A549 (cell line): ENCODE measurements at regions of chr2 and their contacts with region 1.

Region 1: DNA sequence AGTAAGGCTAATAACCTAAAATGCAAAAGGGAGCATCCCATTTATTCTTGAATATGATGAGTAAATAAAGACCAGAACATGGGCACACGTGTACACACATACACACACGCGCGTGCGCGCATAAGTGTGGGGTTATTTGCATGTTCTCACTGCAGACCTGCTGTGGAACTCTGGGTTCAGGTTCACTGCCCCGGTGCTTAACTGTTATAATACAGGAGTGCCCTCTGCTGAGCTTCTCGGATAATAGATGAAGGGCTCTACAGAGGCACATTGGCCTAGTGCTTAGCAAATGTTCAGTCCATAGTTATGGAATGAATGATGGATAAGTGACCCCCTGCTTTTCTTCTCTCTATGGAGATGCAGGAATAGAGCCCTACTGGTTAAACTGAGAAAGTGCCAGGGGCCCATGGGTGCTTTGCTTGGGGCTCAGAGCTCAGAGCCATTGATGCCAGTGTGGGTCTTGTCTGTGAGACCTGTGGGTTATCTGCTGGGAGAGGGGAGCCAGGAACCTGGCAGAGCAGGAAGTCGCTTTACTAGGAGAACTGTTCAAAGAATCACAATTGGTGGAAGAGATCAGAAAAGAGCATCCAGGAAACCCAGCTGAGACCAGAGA is 3.6 kb upstream of the ARL4C start:
- DNase-seq: peak in 1 of 2 experiments; percentile 83
- ATAC-seq: peak; percentile 45 to 73; a peak in 5 of 6 replicates
- H3K4me3 ChIP-seq: no peak overlapping the region
- H3K27ac ChIP-seq: peak overlapping the region; percentile 55 to 99
- H3K4me1 ChIP-seq: peaks cover 34% of the 10 kb centered on the region
- CTCF ChIP-seq: peak; percentile 87
- EP300 ChIP-seq: no peak
- POLR2A ChIP-seq: no peak
- RAD21 ChIP-seq: peak; percentile 98

Region 2: DNA sequence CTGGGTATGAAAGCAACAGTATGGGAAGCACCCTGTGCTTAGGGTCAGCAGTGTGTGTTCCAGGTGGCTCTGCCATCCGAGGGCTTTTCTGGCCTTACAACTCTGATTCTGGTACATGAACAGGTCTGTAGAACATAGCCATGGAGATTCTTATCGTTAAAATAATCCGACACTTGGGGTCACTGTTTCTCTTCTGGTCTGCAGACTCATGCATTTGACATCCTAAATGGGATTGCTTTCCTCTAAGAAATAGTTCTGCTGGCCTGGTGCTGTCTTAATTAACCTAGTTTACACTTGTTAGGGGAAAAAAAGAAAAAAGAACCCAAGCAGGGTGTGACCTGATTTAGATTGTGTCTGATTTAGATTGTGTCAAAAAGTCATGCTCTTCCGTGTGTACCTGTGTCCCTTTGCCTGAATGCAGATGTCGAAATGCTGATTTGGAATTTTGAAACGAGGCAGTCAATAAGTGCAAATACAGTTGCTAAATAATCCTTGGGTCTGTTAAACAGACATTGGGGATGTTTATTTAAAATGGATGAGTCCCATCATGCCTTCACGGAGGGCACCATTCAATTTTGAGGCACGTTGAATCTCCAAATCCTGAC is 523.7 kb before region 1 on chr2:
- CTCF ChIA-PET with region 1: interaction called, 19 read pairs
- POLR2A ChIA-PET with region 1: interaction called, 7 read pairs
- DNase-seq: peak; percentile 64 to 84
- ATAC-seq: peak; percentile 44 to 80; a peak in 4 of 6 replicates
- H3K4me3 ChIP-seq: no peak overlapping the region
- H3K27ac ChIP-seq: peak overlapping the region; percentile 84 to 98
- H3K4me1 ChIP-seq: peaks cover 83% of the 10 kb centered on the region
- CTCF ChIP-seq: peak; percentile 94
- EP300 ChIP-seq: peak in 1 of 2 experiments; percentile 42; a peak in 2 of 5 replicates
- POLR2A ChIP-seq: no peak
- RAD21 ChIP-seq: peak; percentile 97 to 98

Region 3: GRCh38 chr2:234251326-234252271 is 248.9 kb before region 1 on chr2:
- CTCF ChIA-PET with region 1: interaction called, 10 read pairs
- POLR2A ChIA-PET with region 1: interaction called, 12 read pairs
- DNase-seq: peak; percentile 56 to 91
- ATAC-seq: peak; percentile 66 to 70
- H3K4me3 ChIP-seq: no peak overlapping the region
- H3K27ac ChIP-seq: peak overlapping the region; percentile 93 to 95
- H3K4me1 ChIP-seq: peaks cover 74% of the 10 kb centered on the region
- CTCF ChIP-seq: no peak
- EP300 ChIP-seq: peak; percentile 85 to 86; a peak in 3 of 5 replicates
- POLR2A ChIP-seq: no peak
- RAD21 ChIP-seq: peak; percentile 28 to 55; a peak in 3 of 5 replicates

Region 4: DNA sequence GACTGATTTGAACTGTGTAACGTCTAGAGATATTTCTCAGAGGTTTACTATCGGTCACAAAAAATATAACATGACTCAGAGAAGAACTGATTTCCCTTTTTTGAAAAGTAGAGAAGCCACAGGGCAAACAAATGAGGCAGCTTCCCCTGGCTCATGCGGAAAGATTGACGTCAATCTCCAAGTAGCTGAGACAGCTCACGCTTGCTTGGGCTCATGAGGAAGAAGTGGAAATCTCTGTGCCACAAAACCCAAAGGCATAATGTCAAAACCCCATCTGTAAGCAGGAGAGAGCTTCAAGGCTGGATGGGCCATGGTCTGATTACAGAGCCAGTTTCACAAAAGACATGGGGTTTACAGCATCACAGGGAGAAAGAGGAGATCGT is 191.7 kb before region 1 on chr2:
- CTCF ChIA-PET with region 1: interaction called, 13 read pairs
- POLR2A ChIA-PET with region 1: interaction called, 21 read pairs
- DNase-seq: peak; percentile 58 to 96
- ATAC-seq: peak; percentile 84 to 87
- H3K4me3 ChIP-seq: no peak overlapping the region
- H3K27ac ChIP-seq: peak overlapping the region; percentile 88 to 94
- H3K4me1 ChIP-seq: peaks cover 58% of the 10 kb centered on the region
- CTCF ChIP-seq: no peak
- EP300 ChIP-seq: peak; percentile 91 to 96
- POLR2A ChIP-seq: no peak
- RAD21 ChIP-seq: peak; percentile 51 to 65

Region 5: DNA sequence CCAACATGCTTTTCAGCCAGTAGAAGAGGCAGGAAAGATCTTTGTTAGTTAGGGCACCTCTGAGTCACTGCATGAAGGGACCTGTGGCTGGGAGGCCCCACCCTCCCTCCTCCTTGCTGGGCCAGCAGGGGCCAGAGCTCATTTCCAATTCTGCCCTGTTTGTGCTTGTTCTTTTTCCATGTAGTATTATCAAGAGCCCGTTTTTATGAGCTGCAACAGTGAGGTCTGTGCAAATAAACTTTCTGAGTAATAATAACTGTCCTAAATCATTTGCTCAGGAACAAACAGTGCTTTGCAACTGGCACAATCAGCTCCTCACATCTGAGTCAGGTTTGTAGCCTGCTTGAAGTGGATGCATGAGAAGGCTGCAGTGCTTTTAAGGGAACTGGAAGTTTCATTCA is 131.6 kb before region 1 on chr2:
- CTCF ChIA-PET with region 1: interaction called, 8 read pairs
- POLR2A ChIA-PET with region 1: interaction called, 11 read pairs
- DNase-seq: peak; percentile 53 to 94
- ATAC-seq: peak; percentile 94 to 96
- H3K4me3 ChIP-seq: no peak overlapping the region
- H3K27ac ChIP-seq: peak overlapping the region; percentile 91 to 95
- H3K4me1 ChIP-seq: peaks cover 96% of the 10 kb centered on the region
- CTCF ChIP-seq: no peak
- EP300 ChIP-seq: peak; percentile 53 to 63; a peak in 3 of 5 replicates
- POLR2A ChIP-seq: no peak
- RAD21 ChIP-seq: peak; percentile 47; a peak in 4 of 5 replicates

Region 6: DNA sequence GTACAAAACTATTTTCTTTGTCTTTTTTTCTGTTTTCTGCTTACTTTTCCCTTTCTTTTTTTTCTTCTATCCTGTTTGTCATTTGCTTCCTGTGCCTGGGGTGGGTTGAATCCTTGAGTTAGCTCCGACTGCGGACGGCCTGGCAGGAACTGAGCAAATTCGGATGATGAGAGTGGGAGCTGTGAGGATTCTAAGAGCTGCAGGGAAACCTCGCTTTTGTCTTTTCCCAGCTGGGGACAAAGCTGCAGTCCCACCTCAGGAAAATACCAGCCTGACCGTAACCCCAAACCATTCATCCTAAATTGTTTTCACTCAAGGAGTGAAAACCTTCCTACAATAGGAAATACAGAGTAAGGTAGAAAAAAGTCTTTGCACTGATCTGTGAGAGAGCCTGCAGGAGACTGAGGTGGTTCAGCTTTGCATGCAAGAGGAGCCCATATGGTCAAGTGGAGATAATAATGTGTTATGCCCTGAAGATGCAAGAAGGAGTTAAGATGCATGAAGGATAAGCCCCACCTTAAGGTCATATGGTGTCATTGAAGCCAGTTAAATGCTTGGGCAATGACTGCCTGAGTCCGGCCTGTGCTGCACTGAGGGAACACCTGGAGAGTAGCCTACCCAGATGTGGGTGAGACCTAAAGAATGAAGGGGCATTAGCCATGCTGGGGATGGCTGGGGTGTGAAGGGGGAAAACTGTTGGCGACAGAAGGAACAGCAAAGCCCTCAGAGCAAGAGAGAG is 28.1 kb after region 1 on chr2:
- CTCF ChIA-PET with region 1: no interaction called
- POLR2A ChIA-PET with region 1: no interaction called
- DNase-seq: no peak
- ATAC-seq: peak in 1 of 2 experiments; percentile 51; a peak in 3 of 6 replicates
- H3K4me3 ChIP-seq: no peak overlapping the region
- H3K27ac ChIP-seq: no peak overlapping the region
- H3K4me1 ChIP-seq: no peaks in the 10 kb centered on the region
- CTCF ChIP-seq: no peak
- EP300 ChIP-seq: no peak
- POLR2A ChIP-seq: no peak
- RAD21 ChIP-seq: 0 out of 5 replicates have a peak, but pooled peaks of 1 of the 2 experiments have one; percentile 11